Esophagus squamous epithelium (tissue), 5 donors: ENCODE measurements at regions of chr20 and their contacts with region 1.

Region 1: DNA sequence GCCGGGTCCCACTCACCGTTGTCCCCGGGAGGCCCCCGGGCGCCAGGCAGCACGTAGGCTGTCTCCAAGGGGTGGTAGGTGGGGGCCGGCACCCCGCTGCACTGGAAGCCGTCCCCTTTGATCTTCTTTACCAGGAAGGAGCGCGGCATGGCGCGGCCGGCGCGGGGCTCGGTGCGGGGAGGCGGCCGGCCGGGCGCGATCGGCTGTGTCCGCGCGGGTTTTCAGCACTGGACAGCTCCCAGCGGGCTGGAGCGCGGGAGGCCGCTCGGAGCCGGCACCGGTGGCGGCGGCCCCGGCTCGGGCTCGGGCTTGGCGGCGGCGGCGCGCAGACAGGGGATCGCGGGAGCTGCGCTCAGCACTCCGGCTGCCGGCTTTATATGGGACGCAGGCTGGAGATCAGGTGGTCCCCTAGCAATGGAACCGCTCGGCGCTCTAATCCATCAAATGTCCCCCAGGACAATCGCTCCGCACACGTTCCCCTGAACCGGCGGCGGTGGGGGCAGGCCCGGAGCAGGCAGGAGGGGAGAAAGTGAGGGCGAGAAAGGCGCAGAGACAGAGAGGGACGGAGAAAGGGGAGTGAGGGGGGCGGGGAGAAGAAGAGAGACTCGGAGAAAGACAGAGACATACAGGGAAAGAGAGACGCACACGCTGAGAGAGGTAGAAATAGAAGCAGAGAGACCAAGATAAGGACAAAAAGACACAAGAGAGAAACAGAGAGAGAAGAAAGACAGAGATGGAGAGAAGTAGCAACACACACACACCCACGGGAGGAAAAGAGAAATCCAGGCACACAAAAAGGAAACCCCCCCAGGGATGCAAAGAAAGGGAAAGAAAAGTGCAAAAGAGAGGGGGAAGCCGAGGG is at the start of gene SCRT2:
- DNase-seq: no peak
- H3K4me3 ChIP-seq: peak within 1 kb of the TSS in 1 of 4 donors; percentile 36
- H3K27ac ChIP-seq: no peak within 1 kb of the TSS
- H3K4me1 ChIP-seq: peaks cover 8 to 22% (median 8%) of the 10 kb centered on the region in 3 donors
- H3K27me3 ChIP-seq: peaks cover 7 to 99% (median 14%) of the 10 kb centered on the region in 4 donors
- CTCF ChIP-seq: peak in 1 of 6 experiments; percentile 2
- POLR2A ChIP-seq: no peak
- total RNA-seq, gene SCRT2: not detected

Region 2: DNA sequence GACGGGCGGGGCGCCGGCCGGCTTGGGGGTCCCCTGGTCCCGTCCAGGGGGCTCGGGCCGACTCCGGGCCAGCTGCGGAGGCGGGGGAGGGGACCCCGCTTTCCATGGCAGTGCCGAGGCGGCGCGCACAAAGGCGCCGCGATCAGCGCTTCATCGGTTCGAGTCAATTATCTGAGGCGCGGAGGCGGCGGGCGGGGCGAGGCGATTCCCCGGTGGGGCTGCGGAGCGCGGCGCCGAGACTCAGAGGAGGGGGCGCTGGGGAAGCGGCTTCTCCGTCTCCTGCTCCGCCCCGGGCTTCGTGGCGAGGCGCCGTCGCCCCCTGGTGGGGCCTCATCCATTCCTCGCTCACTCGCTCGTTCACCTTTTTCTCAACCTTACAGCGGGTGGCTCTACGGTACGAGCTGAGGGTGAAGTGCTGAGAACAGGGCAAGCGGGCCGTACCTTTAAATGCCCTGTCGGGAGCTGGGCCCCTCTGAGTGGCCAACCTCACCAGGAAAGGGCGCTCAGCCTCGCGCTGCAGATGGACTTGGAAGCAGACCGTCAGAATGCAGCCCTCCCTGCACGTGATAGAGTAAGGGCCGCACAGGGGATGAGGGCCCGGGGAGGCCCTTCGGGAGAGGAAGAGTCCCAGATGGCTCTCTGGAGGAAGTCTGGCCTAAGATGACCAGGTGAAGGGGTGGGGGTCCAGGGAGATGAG is 52.7 kb after region 1 on chr20:
- intact Hi-C with region 1: loop called (anchors 10 kb)
- DNase-seq: no peak
- H3K4me3 ChIP-seq: peak overlapping the region; percentile 1 to 55 (median 28)
- H3K27ac ChIP-seq: no peak overlapping the region
- H3K4me1 ChIP-seq: peaks cover 0 to 12% (median 10%) of the 10 kb centered on the region in 3 donors
- H3K27me3 ChIP-seq: peaks cover 0 to 84% (median 3%) of the 10 kb centered on the region in 4 donors
- CTCF ChIP-seq: peak in 5 of 6 experiments; percentile 24 to 56 (median 43)
- POLR2A ChIP-seq: no peak